Dendritic cell treated with granulocyte-macrophage colony-stimulating factor and Interleukin-4, amounts not matched to agents 40 ng/mL and 50 ng/mL, for 4 days (primary cell): ENCODE measurements at regions of chr2 and their contacts with region 1.

Region 1: DNA sequence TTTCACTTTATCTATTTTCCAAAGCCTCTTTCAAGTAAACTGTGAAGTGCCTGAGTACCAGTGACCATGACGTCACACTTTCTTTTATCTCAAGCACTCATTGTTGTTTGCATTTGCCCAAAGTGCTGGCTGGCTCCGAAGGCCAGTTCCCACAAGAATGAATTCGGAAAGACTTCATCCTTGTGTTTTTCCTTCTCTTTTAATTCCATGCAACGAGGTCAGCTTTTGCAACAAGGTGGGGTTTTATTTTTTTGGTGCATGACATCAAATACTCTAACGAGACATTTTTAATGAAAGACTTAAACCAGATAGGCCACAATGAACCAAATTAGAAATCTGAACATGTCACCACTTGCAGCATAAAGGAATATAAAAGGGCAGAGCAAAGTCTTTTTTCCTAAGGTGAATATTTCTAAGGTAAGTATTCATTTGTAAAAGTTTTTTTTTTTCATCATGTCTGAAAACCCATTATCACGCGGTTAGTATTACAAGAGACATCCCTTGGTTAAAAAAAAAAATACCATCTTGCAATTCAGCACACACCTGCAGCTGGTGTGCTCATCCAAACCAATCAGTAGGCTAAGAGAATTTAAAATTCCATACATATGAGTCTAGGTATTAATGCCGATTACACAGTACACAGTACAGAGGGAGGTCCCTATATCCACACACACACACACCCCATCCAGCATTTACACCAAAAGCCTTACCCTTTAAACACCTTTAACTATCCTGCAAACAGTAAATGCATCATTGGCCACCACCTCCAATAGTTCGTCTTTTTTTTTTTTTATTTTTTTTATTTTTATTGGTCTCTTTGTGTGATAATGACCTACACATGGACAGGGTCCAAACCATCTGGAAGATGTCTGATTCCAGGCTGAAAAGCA is 2.3 kb downstream of the ARL4C start:
- H3K4me3 Mint-ChIP-seq: peak overlapping the region; percentile 99
- H3K27ac Mint-ChIP-seq: peak overlapping the region; percentile 99
- H3K4me1 Mint-ChIP-seq: peaks cover 43% of the 10 kb centered on the region
- H3K27me3 Mint-ChIP-seq: peaks cover 12% of the 10 kb centered on the region

Region 2: GRCh38 chr2:234308813-234309195 is 185.8 kb before region 1 on chr2:
- intact Hi-C with region 1: loop called (anchors 5 kb)
- H3K4me3 Mint-ChIP-seq: peak overlapping the region; percentile 45
- H3K27ac Mint-ChIP-seq: peak overlapping the region; percentile 98
- H3K4me1 Mint-ChIP-seq: peaks cover 60% of the 10 kb centered on the region
- H3K27me3 Mint-ChIP-seq: no peaks in the 10 kb centered on the region

Region 3: GRCh38 chr2:234425619-234426603 is 68.7 kb before region 1 on chr2:
- intact Hi-C with region 1: loop called (anchors 5 kb)
- H3K4me3 Mint-ChIP-seq: no peak overlapping the region
- H3K27ac Mint-ChIP-seq: peak overlapping the region; percentile 98
- H3K4me1 Mint-ChIP-seq: peaks cover 60% of the 10 kb centered on the region
- H3K27me3 Mint-ChIP-seq: no peaks in the 10 kb centered on the region

Region 4: DNA sequence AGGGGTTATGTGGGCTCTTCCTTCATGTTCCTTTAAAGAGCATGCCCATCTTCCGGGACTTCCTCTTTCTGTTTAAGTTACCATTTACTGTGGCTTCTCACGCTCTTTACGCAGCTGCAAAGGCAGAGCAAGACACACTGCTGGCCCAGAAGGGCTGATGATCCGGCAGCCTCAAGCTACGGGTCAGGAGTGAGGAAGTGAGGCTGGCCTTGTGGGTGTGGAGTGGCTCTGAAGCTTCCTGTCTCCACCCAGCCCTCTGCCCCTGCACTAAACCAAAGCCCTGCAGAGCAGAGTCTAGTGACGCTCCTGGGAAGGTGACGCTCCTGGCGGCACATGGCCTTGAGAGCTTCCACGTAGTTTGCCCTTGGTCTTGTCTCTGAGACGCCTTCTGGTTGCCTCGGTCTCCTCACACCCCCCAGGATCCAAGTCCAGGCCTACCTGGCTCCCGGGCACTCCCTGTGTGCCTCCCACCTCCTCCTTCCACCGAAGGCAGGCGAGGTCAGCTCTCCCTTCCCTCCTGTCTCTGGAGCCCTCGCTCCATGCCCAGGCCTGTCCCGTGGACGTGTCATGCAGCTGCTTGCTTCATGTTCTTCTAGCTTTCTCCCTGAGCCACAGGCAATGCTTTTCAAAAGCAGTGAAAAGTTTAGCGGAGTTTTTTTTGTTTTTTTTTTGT is 48.1 kb before region 1 on chr2:
- intact Hi-C with region 1: loop called (anchors 2 kb)
- H3K4me3 Mint-ChIP-seq: peak overlapping the region; percentile 51
- H3K27ac Mint-ChIP-seq: peak overlapping the region; percentile 99
- H3K4me1 Mint-ChIP-seq: peaks cover 60% of the 10 kb centered on the region
- H3K27me3 Mint-ChIP-seq: no peaks in the 10 kb centered on the region

Region 5: GRCh38 chr2:234919711-234920110 is 425.1 kb after region 1 on chr2:
- intact Hi-C with region 1: no loop called
- H3K4me3 Mint-ChIP-seq: no peak overlapping the region
- H3K27ac Mint-ChIP-seq: no peak overlapping the region
- H3K4me1 Mint-ChIP-seq: no peaks in the 10 kb centered on the region
- H3K27me3 Mint-ChIP-seq: peaks cover 3% of the 10 kb centered on the region